Vagina (tissue), 2 donors: ENCODE measurements at regions of chr16 and their contacts with region 1.

Region 1: GRCh38 chr16:89330177-89330856 is 112.8 kb downstream of the ZNF778 start:
- DNase-seq: no peak
- H3K4me3 ChIP-seq: no peak overlapping the region
- H3K27ac ChIP-seq: no peak overlapping the region
- H3K4me1 ChIP-seq: peaks cover 82% of the 10 kb centered on the region
- H3K27me3 ChIP-seq: no peaks in the 10 kb centered on the region
- CTCF ChIP-seq: no peak
- POLR2A ChIP-seq: no peak

Region 2: GRCh38 chr16:89020068-89020924 is 310.0 kb before region 1 on chr16:
- intact Hi-C with region 1: no loop called
- DNase-seq: no peak
- H3K4me3 ChIP-seq: no peak overlapping the region
- H3K27ac ChIP-seq: no peak overlapping the region
- H3K4me1 ChIP-seq: no peaks in the 10 kb centered on the region
- H3K27me3 ChIP-seq: no peaks in the 10 kb centered on the region
- CTCF ChIP-seq: no peak
- POLR2A ChIP-seq: no peak

Region 3: DNA sequence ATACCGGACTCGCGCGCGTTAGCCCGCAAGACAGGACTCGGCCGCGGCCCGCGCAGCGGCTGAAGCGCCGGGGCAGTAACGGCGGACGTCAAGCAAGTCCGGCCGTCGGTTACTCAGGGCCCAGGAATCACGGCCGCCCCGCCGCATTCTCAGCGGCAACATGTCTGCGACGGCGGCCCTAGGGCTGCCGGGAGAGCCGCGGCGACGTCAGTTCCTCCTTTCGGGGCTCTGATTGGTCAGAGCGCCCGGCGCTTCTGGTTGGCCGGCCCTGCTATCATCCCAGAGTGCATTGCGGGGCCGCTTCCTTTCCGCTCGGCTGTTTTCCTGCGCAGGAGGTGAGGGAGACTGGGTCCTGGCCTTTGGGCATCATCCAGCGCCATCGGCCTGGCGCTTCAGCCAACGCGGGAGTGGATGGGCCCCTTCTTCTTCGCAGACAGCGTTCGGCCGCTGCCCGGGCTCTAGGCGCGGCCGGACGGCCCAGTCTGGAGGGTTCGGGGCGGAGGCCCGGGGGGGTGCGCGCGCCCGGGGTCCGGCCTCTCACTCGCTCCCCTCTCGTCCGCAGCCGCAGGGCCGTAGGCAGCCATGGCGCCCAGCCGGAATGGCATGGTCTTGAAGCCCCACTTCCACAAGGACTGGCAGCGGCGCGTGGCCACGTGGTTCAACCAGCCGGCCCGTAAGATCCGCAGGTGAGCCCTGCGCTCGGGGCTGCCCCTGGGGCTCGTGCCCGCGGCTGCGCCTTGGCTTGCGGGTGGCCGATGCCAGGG is 230.2 kb after region 1 on chr16 and contains the start of gene RPL13:
- intact Hi-C with region 1: loop called (anchors 10 kb)
- DNase-seq: peak in 1 of 2 donors; percentile 96
- H3K4me3 ChIP-seq: peak within 1 kb of the TSS; percentile 82 to 88
- H3K27ac ChIP-seq: peak within 1 kb of the TSS; percentile 84
- H3K4me1 ChIP-seq: peaks cover 54% of the 10 kb centered on the region
- H3K27me3 ChIP-seq: no peaks in the 10 kb centered on the region
- CTCF ChIP-seq: no peak
- POLR2A ChIP-seq: peak; percentile 59 to 95
- total RNA-seq, gene RPL13: 8,204 TPM